HepG2 (cell line): ENCODE measurements at regions of chr20 and their contacts with region 1.

Region 1: GRCh38 chr20:34111702-34112599 is at the start of gene EIF2S2:
- DNase-seq: peak; percentile 99
- ATAC-seq: peak; percentile 91
- H3K4me3 ChIP-seq: peak within 1 kb of the TSS; percentile 93 to 100 (median 96)
- H3K27ac ChIP-seq: peak within 1 kb of the TSS; percentile 92
- H3K4me1 ChIP-seq: peaks cover 63% of the 10 kb centered on the region
- H3K27me3 ChIP-seq: peaks cover 0 to 4% of the 10 kb centered on the region in 2 experiments; a peak in 1 of 5 replicates
- CTCF ChIP-seq: no peak; the same call in 1 of the 2 replicates
- EP300 ChIP-seq: peak in 1 of 2 experiments; percentile 76; a peak in 2 of 4 replicates
- POLR2A ChIP-seq: peak; percentile 96 to 97
- RAD21 ChIP-seq: peak; percentile 83
- total RNA-seq, gene EIF2S2: 213 and 316 TPM in 2 replicates

Region 2: GRCh38 chr20:34001378-34001777 is 110.6 kb before region 1 on chr20:
- CTCF ChIA-PET with region 1: no interaction called
- POLR2A ChIA-PET with region 1: interaction called, 10 read pairs
- in situ Hi-C with region 1: no loop called
- intact Hi-C with region 1: no loop called
- DNase-seq: no peak
- ATAC-seq: no peak
- H3K4me3 ChIP-seq: no peak overlapping the region
- H3K27ac ChIP-seq: peak overlapping the region; percentile 39
- H3K4me1 ChIP-seq: peaks cover 99% of the 10 kb centered on the region
- H3K27me3 ChIP-seq: no peaks in the 10 kb centered on the region
- CTCF ChIP-seq: no peak
- EP300 ChIP-seq: no peak
- POLR2A ChIP-seq: no peak
- RAD21 ChIP-seq: no peak

Region 3: GRCh38 chr20:34083137-34083536 is 28.8 kb before region 1 on chr20:
- CTCF ChIA-PET with region 1: no interaction called
- POLR2A ChIA-PET with region 1: interaction called, 27 read pairs
- in situ Hi-C with region 1: no loop called
- intact Hi-C with region 1: no loop called
- DNase-seq: no peak
- ATAC-seq: peak; percentile 4; the same call in 1 of the 3 replicates
- H3K4me3 ChIP-seq: no peak overlapping the region
- H3K27ac ChIP-seq: no peak overlapping the region
- H3K4me1 ChIP-seq: no peaks in the 10 kb centered on the region
- H3K27me3 ChIP-seq: no peaks in the 10 kb centered on the region
- CTCF ChIP-seq: peak; percentile 24
- EP300 ChIP-seq: no peak
- POLR2A ChIP-seq: no peak
- RAD21 ChIP-seq: no peak

Region 4: GRCh38 chr20:34089655-34090345 is 22.2 kb before region 1 on chr20:
- CTCF ChIA-PET with region 1: no interaction called
- POLR2A ChIA-PET with region 1: interaction called, 48 read pairs
- in situ Hi-C with region 1: no loop called
- intact Hi-C with region 1: no loop called
- DNase-seq: no peak
- ATAC-seq: no peak
- H3K4me3 ChIP-seq: no peak overlapping the region
- H3K27ac ChIP-seq: no peak overlapping the region
- H3K4me1 ChIP-seq: no peaks in the 10 kb centered on the region
- H3K27me3 ChIP-seq: no peaks in the 10 kb centered on the region
- CTCF ChIP-seq: no peak
- EP300 ChIP-seq: no peak
- POLR2A ChIP-seq: peak in 1 of 2 experiments; percentile 2; a peak in 3 of 4 replicates
- RAD21 ChIP-seq: no peak

Region 5: DNA sequence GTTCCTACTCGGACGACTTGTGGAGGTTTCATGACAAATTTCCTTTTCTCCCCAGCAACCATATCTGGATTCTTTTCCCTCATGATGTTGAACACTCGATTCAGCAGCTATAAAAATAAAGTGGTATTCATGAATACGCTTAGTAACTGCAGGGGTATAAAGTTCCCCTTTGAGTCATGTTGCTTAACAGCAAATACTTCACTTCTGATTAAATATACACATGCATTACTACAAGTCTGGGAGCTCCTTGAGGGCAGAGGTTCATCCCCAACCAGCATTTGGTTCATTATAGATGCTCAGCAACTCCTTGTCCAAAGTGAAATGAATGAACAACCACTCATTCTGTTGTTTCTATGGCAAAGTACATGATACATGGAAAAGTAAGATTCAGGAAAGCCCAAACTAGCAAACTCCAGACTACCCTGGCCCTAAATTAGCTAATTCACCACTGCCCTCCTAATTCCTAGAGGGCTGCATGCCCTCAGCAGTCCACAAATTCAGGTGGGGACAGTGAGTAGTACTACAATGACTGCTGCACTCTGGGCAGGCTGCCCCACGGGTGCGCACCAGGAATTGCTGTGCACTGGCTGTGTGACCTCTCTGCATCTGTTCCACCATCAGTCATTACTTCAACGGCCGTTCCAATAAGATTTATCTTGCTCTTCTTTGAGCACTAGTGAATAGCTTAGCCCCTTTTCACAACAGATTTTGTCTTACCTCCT is 15.1 kb before region 1 on chr20:
- CTCF ChIA-PET with region 1: no interaction called
- POLR2A ChIA-PET with region 1: interaction called, 50 read pairs
- in situ Hi-C with region 1: no loop called
- intact Hi-C with region 1: no loop called
- DNase-seq: no peak
- ATAC-seq: peak; percentile 19; the same call in 2 of the 3 replicates
- H3K4me3 ChIP-seq: no peak overlapping the region
- H3K27ac ChIP-seq: no peak overlapping the region
- H3K4me1 ChIP-seq: no peaks in the 10 kb centered on the region
- H3K27me3 ChIP-seq: no peaks in the 10 kb centered on the region
- CTCF ChIP-seq: no peak
- EP300 ChIP-seq: no peak
- POLR2A ChIP-seq: peak in 1 of 2 experiments; percentile 36; a peak in 1 of 4 replicates
- RAD21 ChIP-seq: no peak